T-cell (primary cell): ENCODE measurements at regions of chr17 and their contacts with region 1.

Region 1: GRCh38 chr17:19766422-19767270 is 18.5 kb upstream of the ALDH3A1 start:
- DNase-seq: peak; percentile 28 to 87 (median 70)
- ATAC-seq: peak; percentile 87 to 92 (median 88)
- H3K4me3 ChIP-seq: no peak overlapping the region
- H3K4me3 Mint-ChIP-seq: peak overlapping the region in 1 of 3 donors; percentile 47
- H3K27ac ChIP-seq: no peak overlapping the region
- H3K27ac Mint-ChIP-seq: peak overlapping the region; percentile 81 to 82
- H3K4me1 ChIP-seq: peaks cover 18 to 45% of the 10 kb centered on the region in 2 experiments
- H3K4me1 Mint-ChIP-seq: peaks cover 40 to 48% (median 42%) of the 10 kb centered on the region in 3 donors
- H3K27me3 ChIP-seq: peaks cover 0 to 20% of the 10 kb centered on the region in 2 experiments
- H3K27me3 Mint-ChIP-seq: peaks cover 0 to 3% of the 10 kb centered on the region in 2 donors

Region 2: GRCh38 chr17:19648475-19649406 is 117.9 kb before region 1 on chr17 and contains the start of gene ALDH3A2:
- CTCF ChIA-PET with region 1: interaction called, 5 to 11 read pairs
- POLR2A ChIA-PET with region 1: interaction called in 1 of 2 experiments, 3 read pairs
- DNase-seq: peak; percentile 84 to 99 (median 91)
- ATAC-seq: peak; percentile 95 to 98 (median 96)
- H3K4me3 ChIP-seq: peak within 1 kb of the TSS; percentile 83 to 86
- H3K4me3 Mint-ChIP-seq: peak within 1 kb of the TSS; percentile 93 to 99 (median 94)
- H3K27ac ChIP-seq: peak within 1 kb of the TSS; percentile 65
- H3K27ac Mint-ChIP-seq: peak within 1 kb of the TSS; percentile 85 to 96
- H3K4me1 ChIP-seq: peaks cover 6 to 25% of the 10 kb centered on the region in 2 experiments
- H3K4me1 Mint-ChIP-seq: peaks cover 40 to 45% (median 42%) of the 10 kb centered on the region in 3 donors
- H3K27me3 ChIP-seq: no peaks in the 10 kb centered on the region
- H3K27me3 Mint-ChIP-seq: no peaks in the 10 kb centered on the region
- total RNA-seq, gene ALDH3A2: 21.9 to 38.0 (median 35.7) TPM

Region 3: DNA sequence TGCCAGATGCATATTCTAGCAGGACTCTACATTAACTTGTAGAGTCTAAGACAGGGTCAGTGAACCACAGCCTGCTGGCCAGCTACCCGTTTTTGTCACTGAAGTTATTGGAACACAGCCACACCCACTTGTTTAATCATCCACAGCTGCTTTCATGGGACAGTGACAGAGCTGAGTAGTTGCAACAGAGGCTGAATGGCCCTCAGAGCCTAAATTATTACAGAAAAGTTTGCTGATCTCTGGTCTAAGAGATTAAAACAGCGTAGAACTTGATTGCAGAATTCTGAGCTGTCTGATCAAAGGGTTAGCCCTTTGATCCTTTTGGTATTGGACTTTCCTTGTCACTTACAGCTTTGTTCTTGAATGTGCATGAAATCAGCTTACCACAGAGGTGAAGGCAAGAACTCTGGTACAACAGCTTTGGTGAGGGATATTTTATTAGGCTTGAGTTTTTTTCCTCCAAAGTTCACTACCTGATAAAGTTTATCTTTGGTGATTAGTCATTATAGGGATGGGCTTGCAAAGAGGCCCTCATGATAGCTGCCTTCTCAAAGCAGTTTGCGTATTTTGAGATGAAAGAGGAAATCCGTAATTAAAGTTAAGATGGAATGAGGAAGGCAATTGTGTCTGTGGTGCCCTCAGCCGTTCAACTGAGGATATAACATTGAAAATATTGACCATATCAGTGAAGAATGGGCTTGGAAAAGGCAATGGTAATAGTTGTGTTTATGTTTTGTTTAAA is 94.5 kb before region 1 on chr17:
- CTCF ChIA-PET with region 1: interaction called in 1 of 2 experiments, 11 read pairs
- POLR2A ChIA-PET with region 1: no interaction called
- DNase-seq: no peak
- ATAC-seq: no peak
- H3K4me3 ChIP-seq: no peak overlapping the region
- H3K4me3 Mint-ChIP-seq: no peak overlapping the region
- H3K27ac ChIP-seq: no peak overlapping the region
- H3K27ac Mint-ChIP-seq: no peak overlapping the region
- H3K4me1 ChIP-seq: no peaks in the 10 kb centered on the region
- H3K4me1 Mint-ChIP-seq: peaks cover 0 to 2% (median 0%) of the 10 kb centered on the region in 3 donors
- H3K27me3 ChIP-seq: no peaks in the 10 kb centered on the region
- H3K27me3 Mint-ChIP-seq: no peaks in the 10 kb centered on the region